OCI-LY7 (cell line): ENCODE measurements at regions of chr11 and their contacts with region 1.

Region 1: DNA sequence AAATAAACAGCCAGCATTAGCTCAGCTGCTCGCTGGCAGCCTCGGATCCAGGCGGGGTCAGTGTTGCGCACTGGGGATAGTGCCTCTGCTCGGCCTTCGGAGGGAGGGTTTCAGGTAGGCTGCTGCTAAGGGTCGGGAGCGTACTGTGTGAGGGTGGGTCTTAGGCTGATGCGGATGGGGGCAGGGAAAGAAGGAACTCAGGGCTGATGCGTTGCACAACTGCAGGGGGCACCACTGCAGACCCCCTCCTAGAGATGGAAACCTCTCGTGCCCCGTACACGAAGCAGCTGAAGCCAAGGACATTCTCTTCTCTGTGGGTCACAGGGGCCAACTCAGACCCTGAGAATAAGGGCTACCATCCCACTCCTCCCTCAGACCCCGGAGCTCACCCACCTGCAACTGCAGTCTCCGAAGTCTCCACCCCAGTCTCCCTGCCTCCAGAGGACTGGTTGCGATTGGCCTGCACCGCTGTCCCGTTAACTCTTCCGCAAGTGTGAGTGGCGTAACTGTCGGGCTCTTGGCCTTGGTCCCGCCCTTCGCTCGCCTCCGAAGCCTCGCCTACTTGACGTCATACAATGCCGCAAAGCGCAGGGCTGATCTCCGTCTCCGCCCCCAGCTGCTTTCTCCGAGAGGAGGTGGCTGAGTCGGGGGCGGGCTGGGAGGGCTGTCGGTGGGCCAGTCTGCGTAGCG is at the start of gene KBTBD3:
- DNase-seq: peak; percentile 99
- H3K4me3 ChIP-seq: peak within 1 kb of the TSS; percentile 88
- H3K27ac ChIP-seq: peak within 1 kb of the TSS; percentile 70
- H3K4me1 ChIP-seq: peaks cover 38% of the 10 kb centered on the region
- CTCF ChIP-seq: peak; percentile 77
- total RNA-seq, gene KBTBD3: 6.4 and 10.3 TPM in 2 replicates

Region 2: GRCh38 chr11:106021967-106022794 is 54.9 kb before region 1 on chr11 and contains the start of gene MSANTD4:
- CTCF ChIA-PET with region 1: no interaction called
- POLR2A ChIA-PET with region 1: interaction called, 3 read pairs
- intact Hi-C with region 1: loop called (anchors 1 kb)
- DNase-seq: peak; percentile 99
- H3K4me3 ChIP-seq: peak within 1 kb of the TSS; percentile 94
- H3K27ac ChIP-seq: peak within 1 kb of the TSS; percentile 54
- H3K4me1 ChIP-seq: peaks cover 35% of the 10 kb centered on the region
- CTCF ChIP-seq: no peak
- total RNA-seq, gene MSANTD4: 26.4 and 26.6 TPM in 2 replicates

Region 3: DNA sequence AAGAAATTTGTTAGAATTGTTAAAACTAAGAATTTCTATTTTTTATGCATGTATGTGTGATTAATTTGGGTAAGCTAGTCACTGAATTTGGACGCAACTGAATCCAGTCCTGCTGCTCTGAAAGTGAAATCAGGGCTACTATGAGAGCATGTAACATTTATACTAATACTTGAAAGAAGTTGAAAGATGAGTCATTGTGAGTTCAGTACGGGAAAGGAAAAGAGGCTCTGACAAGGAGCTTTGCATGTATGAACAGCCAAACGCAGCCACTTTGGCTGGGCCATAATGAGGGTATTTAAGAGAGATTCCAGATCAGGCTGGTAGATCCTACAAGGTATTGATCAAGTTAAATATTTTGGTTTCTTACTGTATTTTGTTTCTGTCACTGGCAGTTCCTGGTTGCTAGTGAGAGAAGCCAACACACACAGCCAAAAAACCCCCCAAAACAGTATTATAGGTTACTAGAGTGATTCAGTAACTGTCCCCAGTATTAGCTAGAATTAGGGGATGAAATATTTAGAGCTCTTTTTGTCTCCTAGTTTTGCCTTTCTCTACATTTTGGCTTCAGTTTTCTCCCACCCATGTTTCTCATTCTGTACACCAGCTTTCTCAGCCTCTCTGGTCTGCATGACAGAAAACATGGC is 14.5 kb after region 1 on chr11:
- CTCF ChIA-PET with region 1: interaction called, 4 read pairs
- POLR2A ChIA-PET with region 1: interaction called, 14 read pairs
- intact Hi-C with region 1: no loop called
- DNase-seq: no peak
- H3K4me3 ChIP-seq: no peak overlapping the region
- H3K27ac ChIP-seq: no peak overlapping the region
- H3K4me1 ChIP-seq: no peaks in the 10 kb centered on the region
- CTCF ChIP-seq: no peak

Region 4: GRCh38 chr11:106098893-106099553 is 22.0 kb after region 1 on chr11:
- CTCF ChIA-PET with region 1: no interaction called
- POLR2A ChIA-PET with region 1: interaction called, 14 read pairs
- intact Hi-C with region 1: no loop called
- DNase-seq: no peak
- H3K4me3 ChIP-seq: no peak overlapping the region
- H3K27ac ChIP-seq: no peak overlapping the region
- H3K4me1 ChIP-seq: no peaks in the 10 kb centered on the region
- CTCF ChIP-seq: no peak

Region 5: GRCh38 chr11:106306942-106307341 is 229.9 kb after region 1 on chr11:
- CTCF ChIA-PET with region 1: no interaction called
- POLR2A ChIA-PET with region 1: no interaction called
- intact Hi-C with region 1: no loop called
- DNase-seq: no peak
- H3K4me3 ChIP-seq: no peak overlapping the region
- H3K27ac ChIP-seq: no peak overlapping the region
- H3K4me1 ChIP-seq: no peaks in the 10 kb centered on the region
- CTCF ChIP-seq: no peak

Region 6: GRCh38 chr11:107457558-107458271 is 1380.7 kb after region 1 on chr11 and contains the start of gene CWF19L2:
- CTCF ChIA-PET with region 1: no interaction called
- POLR2A ChIA-PET with region 1: interaction called, 3 read pairs
- intact Hi-C with region 1: loop called (anchors 10 kb)
- DNase-seq: peak; percentile 98
- H3K4me3 ChIP-seq: peak within 1 kb of the TSS; percentile 92
- H3K27ac ChIP-seq: peak within 1 kb of the TSS; percentile 77
- H3K4me1 ChIP-seq: peaks cover 16% of the 10 kb centered on the region
- CTCF ChIP-seq: 0 out of 2 replicates have a peak, but pooled peaks have one; percentile 11
- total RNA-seq, gene CWF19L2: 13.4 and 20.6 TPM in 2 replicates